ENCODE measurements at regions of chr22 and their contacts with region 1.

Region 1: DNA sequence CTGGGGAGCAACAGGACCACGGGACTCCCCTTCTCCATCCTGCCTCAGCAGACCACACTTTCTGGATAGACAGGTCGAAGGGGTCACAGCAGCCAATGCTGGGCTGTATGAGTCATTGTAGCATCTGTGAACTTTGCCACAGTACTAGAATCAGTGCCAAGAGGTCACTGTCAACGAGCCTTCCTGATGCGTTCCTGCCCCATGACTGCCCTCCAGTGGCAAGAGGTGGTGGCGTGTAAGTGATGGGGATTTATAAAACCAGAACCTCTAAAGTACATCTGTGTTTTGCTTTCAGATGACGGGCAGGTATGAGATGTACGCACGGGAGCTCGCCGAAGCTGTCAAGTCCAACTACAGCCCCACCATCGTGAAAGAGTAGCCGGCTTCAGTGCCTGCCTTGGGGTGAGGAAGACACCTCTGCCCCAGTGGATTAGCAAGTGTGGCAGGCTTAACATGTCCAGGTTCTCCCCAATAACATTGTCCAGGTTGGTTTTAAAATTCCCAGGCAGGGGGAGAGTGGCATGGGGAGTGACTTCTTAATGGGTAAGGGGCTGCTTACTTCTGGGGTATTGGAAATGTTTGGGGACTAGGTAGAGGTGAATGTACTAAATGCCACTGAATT is 29.4 kb downstream of the GUCD1 start:
- DNase-seq: no peak
- H3K4me3 ChIP-seq: no peak overlapping the region
- CTCF ChIP-seq: peak; percentile 89

Region 2: GRCh38 chr22:24325105-24325757 is 200.3 kb before region 1 on chr22:
- CTCF ChIA-PET with region 1: interaction called, 122 read pairs
- POLR2A ChIA-PET with region 1: no interaction called
- DNase-seq: peak; percentile 99
- H3K4me3 ChIP-seq: no peak overlapping the region
- CTCF ChIP-seq: peak; percentile 59

Region 3: DNA sequence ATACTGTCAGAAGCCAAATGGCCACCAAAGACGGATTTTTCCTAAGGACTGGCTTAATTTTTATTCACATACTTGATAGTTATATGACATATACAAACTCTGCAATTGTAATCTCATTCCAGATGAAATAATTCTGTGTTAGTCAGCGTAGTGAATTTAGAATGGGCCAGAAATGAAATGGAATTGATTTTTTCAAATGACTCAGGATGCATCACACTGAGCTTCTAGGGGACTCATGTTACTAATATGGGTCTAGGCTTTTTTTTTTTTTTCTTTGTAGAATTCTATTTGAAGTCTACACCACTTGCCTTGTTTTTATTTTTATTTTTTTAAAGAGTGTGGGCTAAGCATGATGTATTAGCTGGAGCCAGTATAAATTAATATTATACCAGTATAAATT is 192.2 kb before region 1 on chr22:
- CTCF ChIA-PET with region 1: interaction called, 122 read pairs
- POLR2A ChIA-PET with region 1: no interaction called
- DNase-seq: peak; percentile 47
- H3K4me3 ChIP-seq: no peak overlapping the region
- CTCF ChIP-seq: no peak

Region 4: GRCh38 chr22:24542641-24543040 is 17.1 kb after region 1 on chr22:
- CTCF ChIA-PET with region 1: interaction called, 25 read pairs
- POLR2A ChIA-PET with region 1: no interaction called
- DNase-seq: no peak
- H3K4me3 ChIP-seq: no peak overlapping the region
- CTCF ChIP-seq: no peak

Measured in AG04449 (cell line).